ENCODE measurements at regions of chr3 and their contacts with region 1.

Region 1: GRCh38 chr3:60431599-60431958 is 819.7 kb downstream of the FHIT start:
- DNase-seq: peak; percentile 5 to 71 (median 16)
- ATAC-seq: peak; percentile 97
- H3K4me3 ChIP-seq: no peak overlapping the region
- H3K27ac ChIP-seq: peak overlapping the region; percentile 40; the same call in 1 of the 3 replicates
- H3K4me1 ChIP-seq: peaks cover 0 to 11% of the 10 kb centered on the region in 2 experiments; a peak in 4 of 5 replicates
- H3K27me3 ChIP-seq: no peaks in the 10 kb centered on the region
- CTCF ChIP-seq: peak; percentile 45 to 60 (median 50); a peak in 5 of 6 replicates
- EP300 ChIP-seq: no peak
- POLR2A ChIP-seq: no peak
- RAD21 ChIP-seq: peak; percentile 41

Region 2: GRCh38 chr3:60192297-60193114 is 239.1 kb before region 1 on chr3:
- CTCF ChIA-PET with region 1: no interaction called
- POLR2A ChIA-PET with region 1: no interaction called
- in situ Hi-C with region 1: no loop called
- intact Hi-C with region 1: loop called (anchors 5 kb)
- DNase-seq: peak in 1 of 4 experiments; percentile 4
- ATAC-seq: no peak
- H3K4me3 ChIP-seq: no peak overlapping the region
- H3K27ac ChIP-seq: no peak overlapping the region
- H3K4me1 ChIP-seq: peaks cover 0 to 19% of the 10 kb centered on the region in 2 experiments; a peak in 3 of 5 replicates
- H3K27me3 ChIP-seq: no peaks in the 10 kb centered on the region
- CTCF ChIP-seq: no peak
- EP300 ChIP-seq: no peak
- POLR2A ChIP-seq: no peak
- RAD21 ChIP-seq: no peak

Region 3: DNA sequence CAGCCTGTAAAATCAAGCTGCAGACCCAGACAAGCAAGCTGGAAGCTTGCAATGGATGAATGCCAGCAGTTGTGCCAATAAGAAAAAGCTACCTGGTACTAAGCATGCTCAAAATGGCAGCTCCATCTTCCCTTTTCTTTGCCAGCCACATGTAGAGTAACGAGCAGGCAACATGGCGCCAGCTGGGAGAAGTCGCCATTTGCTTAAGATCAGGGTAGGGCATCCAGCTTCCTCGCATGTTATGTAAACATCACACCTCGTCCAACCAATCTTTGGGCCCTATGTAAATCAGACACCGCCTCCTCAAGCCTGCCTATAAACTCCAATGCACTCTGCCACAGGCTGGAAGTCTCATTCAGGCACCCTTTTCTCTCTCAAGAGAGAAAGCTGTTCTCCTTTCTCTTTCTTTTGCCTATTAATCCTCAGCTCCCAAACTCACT is 154.2 kb before region 1 on chr3:
- CTCF ChIA-PET with region 1: no interaction called
- POLR2A ChIA-PET with region 1: no interaction called
- in situ Hi-C with region 1: no loop called
- intact Hi-C with region 1: loop called (anchors 10 kb)
- DNase-seq: peak; percentile 39 to 95 (median 58)
- ATAC-seq: peak; percentile 92
- H3K4me3 ChIP-seq: peak overlapping the region; percentile 14
- H3K27ac ChIP-seq: peak overlapping the region; percentile 73
- H3K4me1 ChIP-seq: peaks cover 0 to 12% of the 10 kb centered on the region in 2 experiments; a peak in 3 of 5 replicates
- H3K27me3 ChIP-seq: no peaks in the 10 kb centered on the region
- CTCF ChIP-seq: no peak
- EP300 ChIP-seq: no peak
- POLR2A ChIP-seq: peak; percentile 95
- RAD21 ChIP-seq: no peak

Region 4: GRCh38 chr3:60363817-60364216 is 67.8 kb before region 1 on chr3:
- CTCF ChIA-PET with region 1: no interaction called
- POLR2A ChIA-PET with region 1: no interaction called
- in situ Hi-C with region 1: no loop called
- intact Hi-C with region 1: no loop called
- DNase-seq: no peak
- ATAC-seq: no peak; the same call in 1 of the 3 replicates
- H3K4me3 ChIP-seq: no peak overlapping the region
- H3K27ac ChIP-seq: no peak overlapping the region; the same call in 2 of the 3 replicates
- H3K4me1 ChIP-seq: 0 out of 5 replicates have a peak, but pooled peaks cover 0 to 4% of the 10 kb centered on the region in 2 experiments
- H3K27me3 ChIP-seq: no peaks in the 10 kb centered on the region
- CTCF ChIP-seq: no peak
- EP300 ChIP-seq: no peak
- POLR2A ChIP-seq: no peak
- RAD21 ChIP-seq: no peak

Measured in K562 (cell line).